Tibial artery (tissue), 4 donors: ENCODE measurements at regions of chr10 and their contacts with region 1.

Region 1: DNA sequence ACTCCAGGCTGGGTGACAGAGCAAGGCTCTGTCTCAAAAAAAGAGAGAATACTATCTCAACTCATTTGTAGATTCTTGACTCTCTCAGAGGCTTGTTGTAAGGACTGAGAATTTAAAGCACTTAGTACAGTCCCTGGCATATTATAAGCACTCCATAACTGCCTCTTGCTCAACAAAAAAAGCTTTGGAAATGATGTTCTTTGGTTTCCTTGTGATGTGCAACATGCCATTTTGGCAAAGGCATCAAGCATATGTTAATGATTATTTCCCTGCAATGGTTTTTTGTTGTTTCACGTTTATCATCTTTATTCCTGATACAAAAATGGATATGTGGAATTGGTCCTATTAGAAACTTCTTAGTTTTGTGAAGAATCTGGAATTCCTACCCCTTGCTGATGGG is 15.7 kb downstream of the NOLC1 start:
- DNase-seq: no peak
- H3K4me3 ChIP-seq: no peak overlapping the region
- H3K27ac ChIP-seq: no peak overlapping the region
- H3K4me1 ChIP-seq: peaks cover 0 to 10% (median 2%) of the 10 kb centered on the region in 4 donors
- H3K27me3 ChIP-seq: no peaks in the 10 kb centered on the region
- CTCF ChIP-seq: no peak

Region 2: GRCh38 chr10:102225646-102226541 is 58.0 kb after region 1 on chr10 and contains the start of gene ELOVL3:
- intact Hi-C with region 1: loop called (anchors 5 kb)
- DNase-seq: peak; percentile 92 to 93
- H3K4me3 ChIP-seq: peak within 1 kb of the TSS; percentile 24 to 36
- H3K27ac ChIP-seq: peak within 1 kb of the TSS; percentile 52 to 54
- H3K4me1 ChIP-seq: peaks cover 0 to 26% (median 26%) of the 10 kb centered on the region in 4 donors
- H3K27me3 ChIP-seq: peaks cover 0 to 32% of the 10 kb centered on the region in 2 donors
- CTCF ChIP-seq: peak in 1 of 2 experiments; percentile 9

Region 3: GRCh38 chr10:102352066-102352715 is 184.3 kb after region 1 on chr10:
- intact Hi-C with region 1: loop called (anchors 10 kb)
- DNase-seq: peak in 1 of 2 donors; percentile 29
- H3K4me3 ChIP-seq: no peak overlapping the region
- H3K27ac ChIP-seq: no peak overlapping the region
- H3K4me1 ChIP-seq: no peaks in the 10 kb centered on the region
- H3K27me3 ChIP-seq: no peaks in the 10 kb centered on the region
- CTCF ChIP-seq: peak; percentile 75 to 88

Region 4: GRCh38 chr10:102399217-102400089 is 231.6 kb after region 1 on chr10:
- intact Hi-C with region 1: loop called (anchors 5 kb)
- DNase-seq: peak; percentile 86 to 93
- H3K4me3 ChIP-seq: peak overlapping the region; percentile 57 to 64
- H3K27ac ChIP-seq: peak overlapping the region; percentile 71 to 89
- H3K4me1 ChIP-seq: peaks cover 5 to 41% (median 24%) of the 10 kb centered on the region in 4 donors
- H3K27me3 ChIP-seq: no peaks in the 10 kb centered on the region
- CTCF ChIP-seq: peak; percentile 94 to 95